Activated naive CD4-positive, alpha-beta T cell treated with anti-CD3 and anti-CD28 coated beads for 36 hours (primary cell): ENCODE measurements at regions of chr2 and their contacts with region 1.

Region 1: GRCh38 chr2:26130763-26131162 is 42.1 kb upstream of the GAREM2 start:
- DNase-seq: no peak
- H3K4me3 Mint-ChIP-seq: no peak overlapping the region
- H3K27ac Mint-ChIP-seq: no peak overlapping the region
- H3K4me1 Mint-ChIP-seq: peaks cover 19% of the 10 kb centered on the region
- H3K27me3 Mint-ChIP-seq: no peaks in the 10 kb centered on the region

Region 2: GRCh38 chr2:26072925-26073768 is 57.6 kb before region 1 on chr2:
- CTCF ChIA-PET with region 1: no interaction called
- intact Hi-C with region 1: no loop called
- DNase-seq: no peak
- H3K4me3 Mint-ChIP-seq: no peak overlapping the region
- H3K27ac Mint-ChIP-seq: no peak overlapping the region
- H3K4me1 Mint-ChIP-seq: peaks cover 36% of the 10 kb centered on the region
- H3K27me3 Mint-ChIP-seq: no peaks in the 10 kb centered on the region

Region 3: GRCh38 chr2:26144953-26145680 is 14.4 kb after region 1 on chr2:
- CTCF ChIA-PET with region 1: interaction called, 11 read pairs
- intact Hi-C with region 1: no loop called
- DNase-seq: peak; percentile 82
- H3K4me3 Mint-ChIP-seq: no peak overlapping the region
- H3K27ac Mint-ChIP-seq: no peak overlapping the region
- H3K4me1 Mint-ChIP-seq: no peaks in the 10 kb centered on the region
- H3K27me3 Mint-ChIP-seq: peaks cover 2% of the 10 kb centered on the region